HepG2 (cell line): ENCODE measurements at regions of chr17 and their contacts with region 1.

Region 1: DNA sequence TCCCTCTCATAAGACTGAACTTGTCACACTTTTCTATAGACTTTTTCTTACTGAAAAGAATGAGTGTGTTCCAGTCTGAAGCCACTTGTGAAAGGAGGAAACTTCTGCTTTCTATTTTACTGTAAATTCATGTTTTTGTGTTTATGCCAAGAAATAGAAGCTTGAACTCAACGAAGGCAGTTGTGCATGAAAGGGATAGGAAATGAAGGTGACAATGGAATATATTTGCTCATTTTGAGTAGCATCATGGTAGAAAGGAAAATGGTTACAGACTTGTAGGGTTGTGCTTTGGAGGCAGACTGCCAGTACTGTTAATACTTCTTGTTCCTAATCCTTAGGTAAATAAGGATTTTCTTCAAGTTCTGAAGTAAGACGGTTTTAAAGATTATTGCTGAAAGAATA is 8.1 kb downstream of the CLTC start:
- DNase-seq: no peak
- ATAC-seq: no peak
- H3K4me3 ChIP-seq: no peak overlapping the region
- H3K27ac ChIP-seq: no peak overlapping the region
- H3K4me1 ChIP-seq: peaks cover 69% of the 10 kb centered on the region
- H3K27me3 ChIP-seq: no peaks in the 10 kb centered on the region
- CTCF ChIP-seq: no peak
- EP300 ChIP-seq: no peak
- POLR2A ChIP-seq: no peak
- RAD21 ChIP-seq: no peak

Region 2: DNA sequence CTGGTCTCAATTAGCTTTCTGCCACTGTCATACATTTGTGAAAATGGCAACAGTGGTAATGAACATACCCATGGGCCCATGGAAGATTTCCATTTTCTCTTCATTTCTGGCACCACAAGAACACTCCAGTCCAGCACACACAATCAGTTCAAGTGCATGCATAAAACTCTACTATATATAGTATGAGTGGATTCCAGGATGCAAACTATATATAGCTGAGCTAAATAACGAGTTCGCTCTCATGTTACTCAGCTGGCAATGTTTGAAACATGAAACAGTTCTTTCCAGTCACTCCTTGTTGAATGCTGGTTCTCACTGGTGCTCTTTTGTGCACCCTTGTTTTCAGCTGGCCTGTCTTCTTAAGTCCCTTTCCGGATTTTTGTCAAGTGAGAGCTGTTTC is 137.6 kb before region 1 on chr17:
- CTCF ChIA-PET with region 1: no interaction called
- POLR2A ChIA-PET with region 1: no interaction called
- in situ Hi-C with region 1: no loop called
- intact Hi-C with region 1: no loop called
- DNase-seq: no peak
- ATAC-seq: no peak
- H3K4me3 ChIP-seq: no peak overlapping the region
- H3K27ac ChIP-seq: no peak overlapping the region
- H3K4me1 ChIP-seq: peaks cover 24% of the 10 kb centered on the region
- H3K27me3 ChIP-seq: peaks cover 2 to 15% of the 10 kb centered on the region in 2 experiments; a peak in 4 of 5 replicates
- CTCF ChIP-seq: no peak
- EP300 ChIP-seq: no peak
- POLR2A ChIP-seq: no peak
- RAD21 ChIP-seq: no peak

Region 3: DNA sequence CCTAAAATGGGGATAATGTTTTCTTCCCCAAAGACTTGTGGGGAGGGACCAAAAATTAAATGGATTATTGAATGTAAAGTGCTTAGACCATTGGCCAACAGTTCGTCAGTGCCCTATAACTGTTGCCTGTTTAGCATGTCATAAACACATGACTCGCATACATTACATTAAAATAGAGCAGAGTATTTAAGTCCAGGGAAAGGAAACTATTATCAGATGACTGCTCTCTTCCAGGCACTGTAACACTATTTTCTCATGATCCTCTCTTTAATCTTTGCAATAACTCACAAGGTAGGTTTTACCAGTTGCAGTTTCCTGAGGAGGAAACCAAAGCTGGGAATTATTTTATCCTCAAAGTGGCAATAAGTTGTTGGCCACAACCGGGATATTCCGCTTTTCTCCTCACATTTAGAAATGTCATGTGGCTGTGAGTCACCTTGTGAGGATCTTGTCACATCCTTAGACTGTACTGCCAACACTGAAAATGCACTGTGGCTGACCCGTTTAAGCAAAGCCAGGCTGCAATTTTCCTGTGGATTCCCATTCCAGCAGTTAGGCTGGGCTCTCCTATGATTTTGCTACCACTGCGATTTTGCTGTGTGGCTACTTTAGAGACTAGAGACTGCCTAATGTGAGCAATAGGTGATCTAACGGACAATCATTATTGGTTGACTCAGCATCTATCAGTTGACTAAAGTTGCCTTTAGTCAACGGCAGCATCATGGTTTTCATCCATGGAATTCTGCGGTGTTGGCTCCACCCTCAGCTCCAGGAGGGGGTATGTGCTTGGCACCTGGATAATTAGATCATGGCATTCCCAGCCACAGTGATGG is 120.7 kb before region 1 on chr17:
- CTCF ChIA-PET with region 1: no interaction called
- POLR2A ChIA-PET with region 1: no interaction called
- in situ Hi-C with region 1: no loop called
- intact Hi-C with region 1: no loop called
- DNase-seq: no peak
- ATAC-seq: no peak
- H3K4me3 ChIP-seq: no peak overlapping the region
- H3K27ac ChIP-seq: no peak overlapping the region
- H3K4me1 ChIP-seq: peaks cover 37% of the 10 kb centered on the region
- H3K27me3 ChIP-seq: no peaks in the 10 kb centered on the region
- CTCF ChIP-seq: no peak
- EP300 ChIP-seq: no peak
- POLR2A ChIP-seq: no peak
- RAD21 ChIP-seq: no peak

Region 4: GRCh38 chr17:59688008-59688407 is 60.2 kb after region 1 on chr17:
- CTCF ChIA-PET with region 1: no interaction called
- POLR2A ChIA-PET with region 1: no interaction called
- in situ Hi-C with region 1: no loop called
- intact Hi-C with region 1: loop called (anchors 2 kb)
- DNase-seq: no peak
- ATAC-seq: no peak
- H3K4me3 ChIP-seq: no peak overlapping the region
- H3K27ac ChIP-seq: no peak overlapping the region
- H3K4me1 ChIP-seq: no peaks in the 10 kb centered on the region
- H3K27me3 ChIP-seq: no peaks in the 10 kb centered on the region
- CTCF ChIP-seq: no peak
- EP300 ChIP-seq: no peak
- POLR2A ChIP-seq: 0 out of 4 replicates have a peak, but pooled peaks have one; percentile 21 to 23
- RAD21 ChIP-seq: no peak